ENCODE measurements at regions of chr4 and their contacts with region 1.

Region 1: GRCh38 chr4:143335979-143336780 is 496 bp upstream of the GAB1 start:
- DNase-seq: peak; percentile 96
- H3K4me3 ChIP-seq: peak overlapping the region; percentile 58 to 99 (median 80)
- H3K27ac ChIP-seq: peak overlapping the region; percentile 90 to 99 (median 96)
- H3K4me1 ChIP-seq: peaks cover 0 to 40% (median 34%) of the 10 kb centered on the region in 4 donors
- H3K27me3 ChIP-seq: no peaks in the 10 kb centered on the region
- CTCF ChIP-seq: no peak
- EP300 ChIP-seq: no peak
- POLR2A ChIP-seq: peak in 1 of 2 donors; percentile 42

Region 2: GRCh38 chr4:143224255-143224654 is 111.9 kb before region 1 on chr4:
- intact Hi-C with region 1: loop called (anchors 5 kb)
- DNase-seq: no peak
- H3K4me3 ChIP-seq: no peak overlapping the region
- H3K27ac ChIP-seq: peak overlapping the region; percentile 6 to 50 (median 28)
- H3K4me1 ChIP-seq: peaks cover 0 to 41% (median 26%) of the 10 kb centered on the region in 4 donors
- H3K27me3 ChIP-seq: no peaks in the 10 kb centered on the region
- CTCF ChIP-seq: no peak
- EP300 ChIP-seq: no peak
- POLR2A ChIP-seq: no peak

Region 3: GRCh38 chr4:143381171-143382118 is 45.3 kb after region 1 on chr4:
- intact Hi-C with region 1: loop called (anchors 2 kb)
- DNase-seq: peak; percentile 96
- H3K4me3 ChIP-seq: peak overlapping the region in 1 of 4 donors; percentile 7
- H3K27ac ChIP-seq: peak overlapping the region; percentile 76 to 89 (median 80)
- H3K4me1 ChIP-seq: peaks cover 0 to 97% (median 89%) of the 10 kb centered on the region in 4 donors
- H3K27me3 ChIP-seq: no peaks in the 10 kb centered on the region
- CTCF ChIP-seq: no peak
- EP300 ChIP-seq: no peak
- POLR2A ChIP-seq: no peak

Region 4: DNA sequence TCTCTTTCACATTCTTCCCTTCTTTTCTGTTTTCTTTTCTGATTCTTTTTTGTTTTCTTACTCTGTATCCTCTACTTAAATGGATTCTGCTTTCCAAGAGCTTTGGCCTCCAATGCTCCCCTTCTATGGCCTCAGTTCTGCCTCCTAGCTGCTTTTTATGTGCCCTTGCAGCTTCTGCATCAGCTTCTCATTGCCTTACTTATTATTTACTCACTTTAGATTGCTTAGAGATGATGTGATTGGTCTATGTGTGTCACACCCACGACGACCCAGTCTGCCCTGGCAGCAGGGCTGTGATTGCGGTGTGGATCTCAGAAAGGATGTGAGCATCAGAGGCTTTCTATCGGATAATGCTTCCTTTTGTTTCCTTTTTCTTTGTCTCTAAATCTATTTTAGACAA is 105.5 kb after region 1 on chr4:
- intact Hi-C with region 1: no loop called
- DNase-seq: no peak
- H3K4me3 ChIP-seq: no peak overlapping the region
- H3K27ac ChIP-seq: peak overlapping the region in 1 of 4 donors; percentile 14
- H3K4me1 ChIP-seq: peaks cover 0 to 8% (median 3%) of the 10 kb centered on the region in 4 donors
- H3K27me3 ChIP-seq: no peaks in the 10 kb centered on the region
- CTCF ChIP-seq: no peak
- EP300 ChIP-seq: no peak
- POLR2A ChIP-seq: no peak

Region 5: DNA sequence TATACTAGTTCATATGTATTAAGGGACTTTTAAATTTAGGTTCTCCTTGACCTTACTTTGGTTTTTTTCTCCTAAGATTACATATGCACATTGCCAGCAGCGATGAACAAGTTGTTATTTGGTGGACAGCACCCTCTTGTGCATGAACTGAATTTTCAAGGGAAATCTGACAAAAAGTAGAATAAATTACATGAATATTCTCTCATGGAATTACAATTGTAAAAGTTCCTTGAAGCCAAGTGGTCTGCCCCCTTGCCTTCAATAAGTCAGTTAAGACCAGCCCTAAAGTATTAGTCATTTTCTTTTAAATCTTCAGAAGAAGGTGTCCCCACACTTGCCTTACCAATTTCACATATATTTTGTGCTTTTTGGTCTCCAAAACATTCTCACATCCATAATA is 146.7 kb after region 1 on chr4:
- intact Hi-C with region 1: loop called (anchors 5 kb)
- DNase-seq: no peak
- H3K4me3 ChIP-seq: no peak overlapping the region
- H3K27ac ChIP-seq: no peak overlapping the region
- H3K4me1 ChIP-seq: no peaks in the 10 kb centered on the region
- H3K27me3 ChIP-seq: no peaks in the 10 kb centered on the region
- CTCF ChIP-seq: peak; percentile 49 to 67 (median 56)
- EP300 ChIP-seq: no peak
- POLR2A ChIP-seq: no peak

Measured in sigmoid colon (tissue), 7 donors.